CD8-positive, alpha-beta T cell (primary cell): ENCODE measurements at regions of chr1 and their contacts with region 1.

Region 1: GRCh38 chr1:154558575-154559465 is at the start of gene UBE2Q1:
- DNase-seq: peak; percentile 99 to 100 (median 99)
- ATAC-seq: peak; percentile 88
- H3K4me3 ChIP-seq: peak within 1 kb of the TSS; percentile 70 to 83
- H3K4me3 Mint-ChIP-seq: peak within 1 kb of the TSS; percentile 90
- H3K27ac ChIP-seq: peak within 1 kb of the TSS; percentile 63 to 94
- H3K27ac Mint-ChIP-seq: peak within 1 kb of the TSS; percentile 89
- H3K4me1 ChIP-seq: peaks cover 20% of the 10 kb centered on the region
- H3K4me1 Mint-ChIP-seq: peaks cover 35% of the 10 kb centered on the region
- H3K27me3 ChIP-seq: no peaks in the 10 kb centered on the region
- H3K27me3 Mint-ChIP-seq: no peaks in the 10 kb centered on the region
- CTCF ChIP-seq: no peak
- total RNA-seq, gene UBE2Q1: 77.5 to 77.7 TPM

Region 2: DNA sequence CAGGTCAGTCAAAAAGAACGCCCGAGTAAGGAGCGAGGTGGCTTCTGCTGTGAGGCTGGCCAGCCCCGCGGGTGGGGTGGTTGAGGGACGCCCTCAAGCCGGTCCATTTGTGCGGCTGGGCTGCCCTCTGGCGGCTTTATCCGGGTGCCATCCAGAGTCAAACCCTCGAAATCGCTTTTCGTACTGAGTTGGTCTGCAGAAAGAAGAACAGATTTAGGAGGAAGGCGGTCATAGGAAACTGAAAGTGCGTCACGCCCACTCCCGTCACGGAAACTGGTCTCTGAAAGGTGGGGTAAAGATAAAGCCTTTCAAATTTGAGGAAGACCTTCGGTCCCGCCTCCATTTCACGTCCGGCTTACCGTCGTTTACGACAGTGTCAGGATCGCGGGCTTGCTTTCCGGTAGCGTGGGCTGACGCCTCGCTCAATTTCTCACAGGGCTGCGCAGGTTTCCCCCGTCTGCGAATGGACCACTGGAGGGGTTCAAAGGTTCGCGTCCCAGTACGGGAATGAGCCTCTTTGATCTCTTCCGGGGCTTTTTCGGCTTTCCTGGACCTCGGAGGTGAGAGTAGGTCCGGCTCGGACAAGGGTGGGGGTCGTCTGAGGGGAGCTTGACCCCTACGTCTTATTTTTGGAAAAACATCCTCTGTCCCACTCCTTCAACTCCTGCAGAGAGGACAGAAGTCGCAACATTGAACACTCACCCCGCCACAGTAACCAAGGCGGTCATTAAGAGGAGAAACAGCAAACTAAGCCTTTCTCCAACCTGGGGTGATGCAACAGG is 286.4 kb before region 1 on chr1 and contains the start of gene HAX1:
- CTCF ChIA-PET with region 1: no interaction called
- POLR2A ChIA-PET with region 1: no interaction called
- intact Hi-C with region 1: loop called in 1 of 2 experiments (anchors 1 kb)
- DNase-seq: peak; percentile 91 to 100 (median 94)
- ATAC-seq: peak; percentile 85
- H3K4me3 ChIP-seq: peak within 1 kb of the TSS; percentile 85 to 91
- H3K4me3 Mint-ChIP-seq: peak within 1 kb of the TSS; percentile 94
- H3K27ac ChIP-seq: peak within 1 kb of the TSS; percentile 88 to 92
- H3K27ac Mint-ChIP-seq: peak within 1 kb of the TSS; percentile 98
- H3K4me1 ChIP-seq: peaks cover 22% of the 10 kb centered on the region
- H3K4me1 Mint-ChIP-seq: peaks cover 38% of the 10 kb centered on the region
- H3K27me3 ChIP-seq: no peaks in the 10 kb centered on the region
- H3K27me3 Mint-ChIP-seq: no peaks in the 10 kb centered on the region
- CTCF ChIP-seq: peak; percentile 75
- total RNA-seq, gene HAX1: 56.8 to 58.4 TPM

Region 3: GRCh38 chr1:154517661-154518060 is 41.2 kb before region 1 on chr1:
- CTCF ChIA-PET with region 1: no interaction called
- POLR2A ChIA-PET with region 1: no interaction called
- intact Hi-C with region 1: no loop called
- DNase-seq: no peak
- ATAC-seq: no peak
- H3K4me3 ChIP-seq: no peak overlapping the region
- H3K4me3 Mint-ChIP-seq: no peak overlapping the region
- H3K27ac ChIP-seq: no peak overlapping the region
- H3K27ac Mint-ChIP-seq: no peak overlapping the region
- H3K4me1 ChIP-seq: no peaks in the 10 kb centered on the region
- H3K4me1 Mint-ChIP-seq: no peaks in the 10 kb centered on the region
- H3K27me3 ChIP-seq: no peaks in the 10 kb centered on the region
- H3K27me3 Mint-ChIP-seq: peaks cover 8% of the 10 kb centered on the region
- CTCF ChIP-seq: no peak

Region 4: GRCh38 chr1:154572468-154573167 is 13.8 kb after region 1 on chr1:
- CTCF ChIA-PET with region 1: interaction called, 11 read pairs
- POLR2A ChIA-PET with region 1: no interaction called
- intact Hi-C with region 1: no loop called
- DNase-seq: no peak
- ATAC-seq: no peak
- H3K4me3 ChIP-seq: no peak overlapping the region
- H3K4me3 Mint-ChIP-seq: no peak overlapping the region
- H3K27ac ChIP-seq: no peak overlapping the region
- H3K27ac Mint-ChIP-seq: no peak overlapping the region
- H3K4me1 ChIP-seq: peaks cover 5% of the 10 kb centered on the region
- H3K4me1 Mint-ChIP-seq: no peaks in the 10 kb centered on the region
- H3K27me3 ChIP-seq: peaks cover 6 to 8% of the 10 kb centered on the region in 2 experiments
- H3K27me3 Mint-ChIP-seq: peaks cover 17% of the 10 kb centered on the region
- CTCF ChIP-seq: no peak

Region 5: DNA sequence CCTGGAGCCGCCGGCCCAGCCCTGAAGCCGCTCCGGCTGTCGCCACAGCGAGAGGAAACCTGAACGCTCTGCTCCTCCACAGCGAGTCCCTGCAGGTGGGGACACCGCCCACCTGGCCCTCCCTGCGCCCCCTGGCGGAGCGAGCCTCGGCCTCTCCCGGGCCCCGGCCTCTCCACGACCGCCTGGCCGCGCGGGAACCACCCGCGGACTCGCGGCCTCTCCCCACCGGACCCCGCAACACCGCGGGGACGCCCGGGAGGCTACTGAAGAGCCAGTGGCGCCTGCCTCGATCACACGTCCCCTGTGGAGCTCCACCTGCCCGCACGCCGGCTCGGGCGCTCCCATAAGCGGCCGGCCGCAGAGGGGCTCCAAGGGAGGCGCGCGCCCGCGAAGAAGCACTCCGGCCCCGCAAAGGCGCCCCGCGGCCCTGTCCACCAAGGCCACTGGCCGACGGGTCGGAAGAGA is 201.7 kb after region 1 on chr1:
- CTCF ChIA-PET with region 1: interaction called, 18 read pairs
- POLR2A ChIA-PET with region 1: no interaction called
- intact Hi-C with region 1: loop called (anchors 1 kb)
- DNase-seq: peak; percentile 67 to 94 (median 84)
- ATAC-seq: peak; percentile 91
- H3K4me3 ChIP-seq: peak overlapping the region; percentile 30 to 35
- H3K4me3 Mint-ChIP-seq: peak overlapping the region; percentile 67
- H3K27ac ChIP-seq: no peak overlapping the region
- H3K27ac Mint-ChIP-seq: no peak overlapping the region
- H3K4me1 ChIP-seq: peaks cover 13% of the 10 kb centered on the region
- H3K4me1 Mint-ChIP-seq: peaks cover 25% of the 10 kb centered on the region
- H3K27me3 ChIP-seq: no peaks in the 10 kb centered on the region
- H3K27me3 Mint-ChIP-seq: peaks cover 2% of the 10 kb centered on the region
- CTCF ChIP-seq: peak; percentile 89

Region 6: DNA sequence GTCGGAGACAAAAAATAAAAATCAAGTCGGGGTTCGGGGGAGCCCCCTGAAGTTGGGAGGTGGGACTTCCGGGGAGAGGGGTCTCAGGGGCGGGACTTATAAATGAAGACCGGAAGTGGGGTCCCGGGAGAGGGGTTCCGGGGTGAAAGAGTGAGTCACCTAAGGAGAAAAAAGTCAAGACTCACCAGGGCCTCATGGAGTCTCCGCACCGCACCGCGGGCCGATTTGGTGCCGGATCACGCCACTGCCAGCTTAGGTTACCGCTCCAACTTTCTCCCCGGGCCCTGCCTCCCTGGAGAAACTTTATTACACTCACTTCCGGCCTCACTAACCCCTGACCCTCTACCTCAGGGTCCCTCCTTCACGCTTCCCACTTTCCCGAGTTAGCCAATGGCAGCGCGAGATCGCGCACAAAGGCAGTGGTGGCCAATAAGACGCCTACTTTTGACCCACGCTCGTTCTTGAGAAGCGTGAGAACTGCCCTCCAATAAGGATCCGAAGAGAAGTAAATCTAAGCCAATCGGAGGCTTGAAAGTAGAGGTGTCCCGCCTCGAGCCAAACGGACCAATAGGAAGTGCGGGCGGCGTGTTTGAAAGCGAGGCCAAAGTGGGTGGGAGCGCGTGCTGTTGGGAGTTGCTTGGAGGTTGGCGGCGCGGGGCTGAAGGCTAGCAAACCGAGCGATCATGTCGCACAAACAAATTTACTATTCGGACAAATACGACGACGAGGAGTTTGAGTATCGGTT is 415.4 kb after region 1 on chr1 and contains the start of gene CKS1B:
- CTCF ChIA-PET with region 1: no interaction called
- POLR2A ChIA-PET with region 1: no interaction called
- intact Hi-C with region 1: loop called in 1 of 2 experiments (anchors 1 kb)
- DNase-seq: peak; percentile 92 to 99 (median 97)
- ATAC-seq: peak; percentile 86
- H3K4me3 ChIP-seq: peak within 1 kb of the TSS; percentile 67
- H3K4me3 Mint-ChIP-seq: no peak within 1 kb of the TSS
- H3K27ac ChIP-seq: peak within 1 kb of the TSS; percentile 90 to 95
- H3K27ac Mint-ChIP-seq: no peak within 1 kb of the TSS
- H3K4me1 ChIP-seq: peaks cover 23% of the 10 kb centered on the region
- H3K4me1 Mint-ChIP-seq: peaks cover 26% of the 10 kb centered on the region
- H3K27me3 ChIP-seq: no peaks in the 10 kb centered on the region
- H3K27me3 Mint-ChIP-seq: no peaks in the 10 kb centered on the region
- CTCF ChIP-seq: no peak
- total RNA-seq, gene CKS1B: 2.3 to 2.9 TPM

Region 7: DNA sequence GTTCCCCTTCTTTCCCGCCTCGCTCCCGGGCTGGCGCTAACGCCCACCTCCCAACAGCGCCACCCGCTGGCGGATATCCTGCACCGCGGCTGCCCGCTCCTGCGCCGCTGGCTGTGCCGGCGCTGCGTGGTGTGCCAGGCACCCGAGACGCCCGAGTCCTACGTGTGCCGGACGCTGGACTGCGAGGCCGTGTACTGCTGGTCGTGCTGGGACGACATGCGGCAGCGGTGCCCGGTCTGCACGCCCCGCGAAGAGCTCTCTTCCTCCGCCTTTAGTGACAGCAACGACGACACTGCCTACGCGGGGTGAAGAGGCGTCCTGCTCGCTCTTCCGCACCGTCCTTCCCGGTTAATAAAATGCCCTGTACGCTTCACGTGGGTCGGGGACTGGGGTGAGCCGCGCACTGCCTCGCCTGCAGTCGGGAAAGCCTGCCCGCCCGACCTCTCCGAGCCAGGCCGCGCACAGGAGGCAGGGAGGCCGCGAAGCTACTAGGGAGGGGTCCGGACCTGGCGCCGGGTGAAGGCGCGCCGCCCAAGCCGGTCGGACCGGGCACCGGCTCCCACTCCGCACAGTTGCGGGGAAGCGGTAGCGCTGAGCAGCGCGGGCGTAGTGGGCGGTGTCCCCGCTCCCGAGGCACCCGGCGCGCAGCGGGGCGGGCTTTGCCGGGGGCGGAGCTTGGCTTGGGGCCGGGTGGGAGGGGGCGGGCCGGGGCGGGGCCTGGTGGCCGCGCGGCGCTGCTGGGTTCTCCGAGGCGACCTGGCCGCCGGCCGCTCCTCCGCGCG is 491.9 kb after region 1 on chr1 and contains the start of gene ADAM15:
- CTCF ChIA-PET with region 1: interaction called, 4 read pairs
- POLR2A ChIA-PET with region 1: no interaction called
- intact Hi-C with region 1: loop called in 1 of 2 experiments (anchors 1 kb)
- DNase-seq: peak; percentile 64 to 88 (median 80)
- ATAC-seq: peak; percentile 83
- H3K4me3 ChIP-seq: peak within 1 kb of the TSS; percentile 86 to 94
- H3K4me3 Mint-ChIP-seq: peak within 1 kb of the TSS; percentile 86
- H3K27ac ChIP-seq: peak within 1 kb of the TSS; percentile 45 to 65
- H3K27ac Mint-ChIP-seq: peak within 1 kb of the TSS; percentile 85
- H3K4me1 ChIP-seq: peaks cover 27% of the 10 kb centered on the region
- H3K4me1 Mint-ChIP-seq: peaks cover 19% of the 10 kb centered on the region
- H3K27me3 ChIP-seq: no peaks in the 10 kb centered on the region
- H3K27me3 Mint-ChIP-seq: no peaks in the 10 kb centered on the region
- CTCF ChIP-seq: peak; percentile 99
- total RNA-seq, gene ADAM15: 10.8 to 11.8 TPM

Region 8: DNA sequence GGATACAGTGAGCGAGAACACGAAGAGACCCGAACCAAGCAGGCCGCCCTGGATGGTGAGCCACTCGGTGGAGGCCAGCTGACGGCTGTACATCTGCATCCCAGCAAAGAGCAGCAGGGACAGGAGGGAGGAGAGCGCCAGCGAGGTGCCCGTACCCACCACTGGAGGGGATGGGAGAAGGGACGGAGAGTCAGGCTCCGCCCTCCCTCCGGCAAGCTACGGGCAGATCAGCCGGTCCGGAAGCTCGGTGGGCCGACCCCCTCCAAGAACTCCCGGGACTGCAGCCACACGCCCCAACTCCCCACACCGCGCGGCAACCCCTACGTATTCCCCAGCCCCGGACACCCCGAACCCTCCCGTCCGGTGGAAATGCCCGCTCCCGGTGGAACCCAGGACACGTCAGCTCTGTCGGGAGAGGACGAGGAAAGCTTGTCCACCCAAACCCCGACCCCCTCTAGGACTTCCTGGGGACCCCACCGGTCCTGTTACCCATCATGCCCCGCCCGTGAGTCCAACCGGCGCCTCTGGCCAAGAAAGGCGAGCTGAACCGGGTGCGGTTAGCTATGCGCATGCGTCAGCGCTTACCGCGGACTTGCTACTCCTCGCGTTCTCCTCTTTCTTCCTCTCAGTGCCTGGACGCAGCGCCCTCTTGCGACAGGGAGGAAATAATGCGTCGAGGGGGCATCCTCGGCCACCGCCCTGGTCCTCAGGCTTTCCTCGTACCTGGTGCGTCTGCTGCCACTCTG is 614.1 kb after region 1 on chr1 and contains the start of gene KRTCAP2:
- CTCF ChIA-PET with region 1: no interaction called
- POLR2A ChIA-PET with region 1: no interaction called
- intact Hi-C with region 1: loop called in 1 of 2 experiments (anchors 10 kb)
- DNase-seq: peak; percentile 87 to 97 (median 94)
- ATAC-seq: peak; percentile 82
- H3K4me3 ChIP-seq: peak within 1 kb of the TSS; percentile 72 to 98
- H3K4me3 Mint-ChIP-seq: peak within 1 kb of the TSS; percentile 96
- H3K27ac ChIP-seq: peak within 1 kb of the TSS; percentile 73 to 98
- H3K27ac Mint-ChIP-seq: peak within 1 kb of the TSS; percentile 97
- H3K4me1 ChIP-seq: peaks cover 47% of the 10 kb centered on the region
- H3K4me1 Mint-ChIP-seq: peaks cover 43% of the 10 kb centered on the region
- H3K27me3 ChIP-seq: no peaks in the 10 kb centered on the region
- H3K27me3 Mint-ChIP-seq: no peaks in the 10 kb centered on the region
- CTCF ChIP-seq: peak; percentile 90
- total RNA-seq, gene KRTCAP2: 58.9 to 71.2 TPM